ENCODE measurements at regions of chr9 and their contacts with region 1.

Region 1: DNA sequence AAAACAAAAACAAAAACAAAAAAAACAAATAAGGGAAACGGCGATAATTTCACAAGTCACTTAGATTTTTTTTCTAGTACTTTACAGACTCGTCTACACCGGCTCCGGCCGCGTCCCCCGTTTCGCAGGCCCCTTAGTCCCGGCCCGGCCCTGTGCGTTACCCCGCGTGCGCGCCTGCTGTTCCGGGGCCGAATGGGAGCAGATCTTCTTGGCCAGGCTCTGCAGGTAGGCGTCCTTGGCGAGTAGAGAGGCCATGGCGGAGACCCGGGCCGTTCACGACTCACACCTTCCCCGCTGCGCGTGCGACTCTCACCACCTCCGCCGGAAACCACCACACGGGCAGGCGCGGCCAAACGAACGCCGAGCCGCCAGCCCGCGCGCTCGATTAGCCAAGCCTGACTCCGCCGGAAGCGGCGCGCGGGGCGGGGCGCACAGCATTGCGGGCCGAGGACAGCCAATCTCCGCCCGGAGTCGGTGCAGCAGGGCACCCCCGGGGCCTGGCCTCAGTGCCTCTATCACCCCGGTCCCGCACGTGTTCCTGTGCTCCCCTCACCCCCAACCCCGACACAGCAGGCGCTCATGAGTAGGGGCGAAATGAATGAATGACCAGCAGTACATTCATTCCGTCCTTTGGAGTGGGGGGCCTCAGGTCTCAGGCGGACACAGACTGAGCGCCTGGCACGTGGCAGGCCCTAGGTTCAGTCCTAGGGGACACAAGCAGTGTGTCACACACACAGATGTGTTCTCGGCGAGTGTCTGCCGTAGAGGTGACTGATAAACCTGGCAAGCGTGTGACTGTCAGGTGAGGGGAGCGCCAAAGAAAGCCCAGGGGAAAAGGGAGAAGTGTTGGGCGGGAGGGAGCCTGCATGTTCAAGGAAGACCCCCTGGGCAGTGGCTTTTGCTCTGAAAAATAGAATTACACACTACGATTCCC is at the start of gene SURF6:
- DNase-seq: peak; percentile 81 to 97 (median 93)
- ATAC-seq: peak; percentile 94
- H3K4me3 ChIP-seq: peak within 1 kb of the TSS; percentile 67 to 88
- H3K4me3 Mint-ChIP-seq: peak within 1 kb of the TSS; percentile 96
- H3K27ac ChIP-seq: peak within 1 kb of the TSS; percentile 71 to 73
- H3K27ac Mint-ChIP-seq: peak within 1 kb of the TSS; percentile 95
- H3K4me1 ChIP-seq: peaks cover 41% of the 10 kb centered on the region
- H3K4me1 Mint-ChIP-seq: peaks cover 50% of the 10 kb centered on the region
- H3K27me3 ChIP-seq: no peaks in the 10 kb centered on the region
- H3K27me3 Mint-ChIP-seq: no peaks in the 10 kb centered on the region
- CTCF ChIP-seq: no peak
- total RNA-seq, gene SURF6: 17.0 to 17.8 TPM

Region 2: GRCh38 chr9:133030317-133031129 is 305.6 kb before region 1 on chr9 and contains the start of gene GTF3C5:
- CTCF ChIA-PET with region 1: no interaction called
- POLR2A ChIA-PET with region 1: no interaction called
- intact Hi-C with region 1: loop called in 1 of 2 experiments (anchors 2 kb)
- DNase-seq: peak; percentile 80 to 98 (median 91)
- ATAC-seq: peak; percentile 97
- H3K4me3 ChIP-seq: peak within 1 kb of the TSS; percentile 60 to 96
- H3K4me3 Mint-ChIP-seq: peak within 1 kb of the TSS; percentile 99
- H3K27ac ChIP-seq: peak within 1 kb of the TSS; percentile 75 to 94
- H3K27ac Mint-ChIP-seq: peak within 1 kb of the TSS; percentile 98
- H3K4me1 ChIP-seq: peaks cover 27% of the 10 kb centered on the region
- H3K4me1 Mint-ChIP-seq: peaks cover 54% of the 10 kb centered on the region
- H3K27me3 ChIP-seq: no peaks in the 10 kb centered on the region
- H3K27me3 Mint-ChIP-seq: no peaks in the 10 kb centered on the region
- CTCF ChIP-seq: no peak
- total RNA-seq, gene GTF3C5: 54.1 to 58.7 TPM

Region 3: DNA sequence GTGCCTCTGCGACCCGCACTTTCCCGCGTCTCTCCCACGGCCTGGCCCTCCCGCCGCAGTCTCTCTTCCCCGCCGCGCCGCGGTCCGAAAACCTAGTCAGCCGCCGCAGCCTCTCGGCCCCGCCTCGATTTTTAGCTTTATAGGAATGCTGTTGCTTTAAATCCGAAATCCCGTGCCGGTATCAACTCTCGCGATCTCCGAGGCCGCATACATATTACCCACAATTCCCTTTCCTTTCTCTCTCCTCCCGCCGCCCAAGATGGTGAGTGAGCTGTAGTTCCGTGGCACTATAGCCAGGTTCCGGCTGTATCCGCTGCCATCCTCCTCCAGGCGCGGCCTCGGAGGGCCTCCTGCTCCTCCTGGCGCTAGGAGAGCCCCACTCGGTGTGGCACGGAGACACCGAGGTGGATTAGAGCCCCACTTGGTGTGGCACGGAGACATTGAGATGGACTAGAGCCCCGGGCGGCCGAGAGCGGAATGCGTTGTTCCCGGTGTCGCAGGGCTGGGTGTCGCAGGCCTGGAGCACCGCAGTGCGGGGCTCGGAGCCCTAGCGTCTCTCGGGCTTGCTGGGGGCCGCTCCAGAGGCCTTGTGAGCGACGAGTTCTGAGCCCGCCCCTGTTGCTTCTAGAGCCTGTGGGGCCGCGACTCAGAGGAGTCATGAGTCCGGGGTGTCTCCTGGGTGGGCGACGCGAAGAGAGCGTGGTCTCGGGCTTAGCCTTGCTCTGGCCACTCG is 12.0 kb after region 1 on chr9 and contains the starts of genes MED22 and RPL7A:
- CTCF ChIA-PET with region 1: interaction called, 7 read pairs
- POLR2A ChIA-PET with region 1: interaction called, 4 read pairs
- intact Hi-C with region 1: loop called (anchors 1 kb)
- DNase-seq: peak; percentile 80 to 97 (median 91)
- ATAC-seq: peak; percentile 85
- H3K4me3 ChIP-seq: peak within 1 kb of the TSS; percentile 95 to 100
- H3K4me3 Mint-ChIP-seq: peak within 1 kb of the TSS; percentile 100
- H3K27ac ChIP-seq: peak within 1 kb of the TSS; percentile 87 to 93
- H3K27ac Mint-ChIP-seq: peak within 1 kb of the TSS; percentile 98
- H3K4me1 ChIP-seq: peaks cover 23% of the 10 kb centered on the region
- H3K4me1 Mint-ChIP-seq: peaks cover 39% of the 10 kb centered on the region
- H3K27me3 ChIP-seq: no peaks in the 10 kb centered on the region
- H3K27me3 Mint-ChIP-seq: no peaks in the 10 kb centered on the region
- CTCF ChIP-seq: no peak
- total RNA-seq, gene MED22: 17.8 to 21.2 TPM
- total RNA-seq, gene RPL7A: 2,612 to 2,623 TPM

Region 4: GRCh38 chr9:133406480-133407307 is 70.5 kb after region 1 on chr9:
- CTCF ChIA-PET with region 1: interaction called, 3 read pairs
- POLR2A ChIA-PET with region 1: no interaction called
- intact Hi-C with region 1: loop called in 1 of 2 experiments (anchors 2 kb)
- DNase-seq: peak; percentile 62 to 87 (median 83)
- ATAC-seq: peak; percentile 91
- H3K4me3 ChIP-seq: no peak overlapping the region
- H3K4me3 Mint-ChIP-seq: no peak overlapping the region
- H3K27ac ChIP-seq: peak overlapping the region in 1 of 2 experiments; percentile 58
- H3K27ac Mint-ChIP-seq: peak overlapping the region; percentile 64
- H3K4me1 ChIP-seq: peaks cover 3% of the 10 kb centered on the region
- H3K4me1 Mint-ChIP-seq: peaks cover 11% of the 10 kb centered on the region
- H3K27me3 ChIP-seq: no peaks in the 10 kb centered on the region
- H3K27me3 Mint-ChIP-seq: no peaks in the 10 kb centered on the region
- CTCF ChIP-seq: peak; percentile 89

Region 5: DNA sequence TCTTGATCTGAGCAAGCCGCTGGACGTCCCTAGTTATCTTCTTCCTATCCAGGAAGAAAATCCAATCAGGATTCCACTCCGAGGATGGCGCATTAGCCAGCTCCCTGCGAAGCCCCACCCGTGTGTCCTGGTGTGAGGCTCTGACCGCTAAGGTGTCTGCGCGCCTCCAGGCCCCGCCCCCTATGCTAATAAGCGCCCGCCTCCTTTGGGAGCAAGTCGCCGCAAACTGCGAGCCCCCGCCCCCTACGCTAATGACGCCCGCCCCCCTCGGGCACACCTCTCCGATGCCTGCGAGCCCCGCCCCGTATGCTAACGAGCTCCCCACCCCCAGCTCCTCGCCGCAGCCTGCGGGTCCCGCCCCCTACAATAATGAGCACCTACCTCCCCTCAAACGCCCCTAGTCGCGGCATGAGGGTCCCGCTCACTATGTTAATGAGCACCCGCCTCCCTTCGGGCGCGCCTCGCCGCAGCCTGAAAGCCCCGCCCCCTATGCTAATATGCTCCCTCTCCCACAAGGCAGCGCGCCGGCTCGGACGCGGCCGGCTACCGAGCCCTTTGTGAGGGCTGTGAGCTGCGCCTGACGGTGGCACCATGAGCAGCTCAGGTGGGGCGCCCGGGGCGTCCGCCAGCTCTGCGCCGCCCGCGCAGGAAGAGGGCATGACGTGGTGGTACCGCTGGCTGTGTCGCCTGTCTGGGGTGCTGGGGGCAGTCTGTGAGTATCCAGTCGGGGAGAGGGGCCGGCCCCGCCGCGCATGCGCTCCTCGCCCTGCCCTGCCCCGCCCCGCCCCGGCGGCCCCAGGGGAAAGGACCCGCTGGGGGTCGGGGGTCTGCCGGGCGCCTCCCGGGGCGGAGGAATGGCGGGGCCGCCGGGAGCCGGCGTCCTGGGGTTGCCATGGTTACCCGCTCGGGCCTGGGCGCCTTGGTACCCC is 123.6 kb after region 1 on chr9 and contains the start of gene CACFD1:
- CTCF ChIA-PET with region 1: no interaction called
- POLR2A ChIA-PET with region 1: no interaction called
- intact Hi-C with region 1: loop called in 1 of 2 experiments (anchors 1 kb)
- DNase-seq: peak; percentile 77 to 96 (median 93)
- ATAC-seq: peak; percentile 80
- H3K4me3 ChIP-seq: peak within 1 kb of the TSS; percentile 71 to 76
- H3K4me3 Mint-ChIP-seq: peak within 1 kb of the TSS; percentile 87
- H3K27ac ChIP-seq: peak within 1 kb of the TSS; percentile 74 to 80
- H3K27ac Mint-ChIP-seq: peak within 1 kb of the TSS; percentile 97
- H3K4me1 ChIP-seq: peaks cover 14% of the 10 kb centered on the region
- H3K4me1 Mint-ChIP-seq: peaks cover 12% of the 10 kb centered on the region
- H3K27me3 ChIP-seq: no peaks in the 10 kb centered on the region
- H3K27me3 Mint-ChIP-seq: no peaks in the 10 kb centered on the region
- CTCF ChIP-seq: no peak
- total RNA-seq, gene CACFD1: 7.4 to 9.7 TPM

Region 6: GRCh38 chr9:134024828-134025605 is 688.9 kb after region 1 on chr9 and contains the start of gene BRD3OS:
- CTCF ChIA-PET with region 1: no interaction called
- POLR2A ChIA-PET with region 1: no interaction called
- intact Hi-C with region 1: loop called in 1 of 2 experiments (anchors 10 kb)
- DNase-seq: peak; percentile 81 to 98 (median 90)
- ATAC-seq: peak; percentile 96
- H3K4me3 ChIP-seq: peak within 1 kb of the TSS; percentile 71 to 92
- H3K4me3 Mint-ChIP-seq: peak within 1 kb of the TSS; percentile 80
- H3K27ac ChIP-seq: peak within 1 kb of the TSS; percentile 56 to 65
- H3K27ac Mint-ChIP-seq: peak within 1 kb of the TSS; percentile 45
- H3K4me1 ChIP-seq: peaks cover 11% of the 10 kb centered on the region
- H3K4me1 Mint-ChIP-seq: peaks cover 11% of the 10 kb centered on the region
- H3K27me3 ChIP-seq: no peaks in the 10 kb centered on the region
- H3K27me3 Mint-ChIP-seq: no peaks in the 10 kb centered on the region
- CTCF ChIP-seq: no peak
- total RNA-seq, gene BRD3OS: 3.3 to 4.2 TPM

Measured in CD8-positive, alpha-beta T cell (primary cell).